ENCODE measurements at regions of chr1 and their contacts with region 1.

Region 1: DNA sequence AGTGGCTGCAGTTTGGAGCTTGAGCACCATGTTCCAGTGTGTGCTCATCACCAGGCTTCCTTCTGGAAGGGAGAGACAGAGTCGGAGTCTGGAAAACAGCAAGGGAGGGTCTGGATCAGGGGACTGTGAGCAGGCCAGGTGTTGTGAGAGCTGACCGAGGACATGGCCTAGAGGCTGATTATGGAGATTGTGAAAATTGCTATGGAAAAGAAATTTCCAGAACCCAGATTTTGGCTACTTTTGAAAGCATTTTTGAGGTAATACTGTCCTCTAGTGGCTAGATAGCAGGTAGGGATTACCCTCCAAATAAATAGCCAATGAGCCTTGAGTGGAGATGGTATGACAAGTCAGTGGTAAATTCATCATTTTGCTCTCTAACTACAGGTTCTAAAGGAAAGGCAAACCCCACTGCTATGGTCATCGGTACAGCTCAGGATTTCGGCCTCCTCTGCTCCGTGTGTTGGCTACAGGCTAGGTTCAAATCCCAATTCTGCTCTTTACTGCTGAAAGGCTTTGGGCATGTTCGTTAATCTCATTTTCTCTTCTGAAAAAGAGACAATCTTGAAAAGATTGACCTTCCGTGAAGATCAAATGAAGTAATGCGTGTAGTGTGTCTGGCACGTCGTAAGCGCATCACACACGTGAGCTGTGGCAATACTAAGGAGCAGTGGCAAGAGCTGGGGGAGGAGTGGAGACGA is 1.0 kb upstream of the HAO2 start:
- ATAC-seq: peak in 5 of 8 experiments; percentile 37 to 84 (median 49)
- H3K4me3 ChIP-seq: no peak overlapping the region
- H3K27ac ChIP-seq: no peak overlapping the region
- H3K4me1 ChIP-seq: no peaks in the 10 kb centered on the region

Region 2: DNA sequence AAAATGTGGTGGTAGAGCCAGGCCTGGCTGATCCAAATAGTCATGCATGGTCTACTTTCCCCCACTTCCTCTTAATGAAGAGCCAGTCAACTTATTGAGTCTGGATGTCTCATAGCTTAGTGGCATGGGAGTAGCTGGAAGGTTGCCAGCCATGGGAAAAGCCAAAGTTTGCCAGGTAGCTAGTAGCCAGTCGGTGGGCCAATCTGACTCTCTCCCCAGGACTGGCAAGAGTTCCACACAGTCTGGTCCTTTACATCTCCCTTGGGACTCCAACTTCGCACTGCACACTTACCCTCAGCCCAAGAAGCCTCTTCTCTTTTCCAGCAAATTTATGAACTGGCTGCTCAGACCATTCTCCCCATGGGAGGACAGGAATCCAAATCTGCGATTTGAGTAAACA is 235.4 kb before region 1 on chr1:
- in situ Hi-C with region 1: no loop called
- ATAC-seq: no peak
- H3K4me3 ChIP-seq: no peak overlapping the region
- H3K27ac ChIP-seq: no peak overlapping the region
- H3K4me1 ChIP-seq: no peaks in the 10 kb centered on the region

Region 3: DNA sequence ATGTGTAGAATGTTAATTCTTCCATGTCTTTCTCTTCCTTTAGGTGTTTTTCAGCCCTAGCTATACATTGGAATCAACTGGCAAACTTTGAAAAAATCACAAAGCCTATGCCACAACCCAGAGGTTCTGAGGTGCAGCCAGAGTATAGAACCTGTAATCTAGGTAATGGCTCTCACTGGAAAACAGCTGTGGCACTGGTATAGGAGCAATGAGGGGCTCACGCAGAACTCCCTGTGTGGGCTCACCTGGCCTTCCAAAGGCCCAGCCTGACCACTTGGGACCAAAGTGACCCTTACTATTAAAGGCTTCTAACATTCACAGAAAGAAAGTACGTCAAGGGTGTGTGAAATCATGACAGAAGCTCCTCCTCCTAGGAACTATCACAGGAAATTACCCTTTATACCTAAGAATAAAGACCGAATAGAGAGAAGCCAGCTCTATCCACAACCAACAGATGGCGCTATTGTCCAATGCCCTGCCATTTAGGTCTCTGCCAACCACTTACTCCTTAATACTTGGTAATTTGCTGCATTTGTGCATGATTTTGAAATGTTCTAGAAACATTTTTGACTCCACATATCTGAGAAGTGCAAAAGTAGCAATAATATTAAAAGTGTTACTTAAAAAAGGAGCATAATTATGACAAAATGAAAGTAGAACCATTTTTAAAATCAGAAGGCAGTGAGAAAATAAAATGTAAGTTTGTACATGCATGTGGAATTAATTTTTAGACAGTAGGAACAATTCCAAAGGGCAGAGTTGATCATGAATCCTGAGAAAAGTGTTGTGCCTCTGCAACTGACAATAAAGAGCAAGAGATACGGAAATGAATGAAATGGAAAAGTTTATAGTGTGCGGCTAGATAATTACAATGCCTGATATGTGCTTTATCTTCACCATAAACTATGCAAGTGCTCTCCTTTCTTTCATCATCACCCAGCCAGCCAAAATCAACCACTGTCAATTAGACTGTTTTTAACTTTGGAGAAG is 92.1 kb before region 1 on chr1:
- in situ Hi-C with region 1: loop called in 4 of 9 experiments (anchors 10 kb)
- ATAC-seq: peak; percentile 39 to 77 (median 56)
- H3K4me3 ChIP-seq: no peak overlapping the region
- H3K27ac ChIP-seq: no peak overlapping the region
- H3K4me1 ChIP-seq: no peaks in the 10 kb centered on the region

Region 4: DNA sequence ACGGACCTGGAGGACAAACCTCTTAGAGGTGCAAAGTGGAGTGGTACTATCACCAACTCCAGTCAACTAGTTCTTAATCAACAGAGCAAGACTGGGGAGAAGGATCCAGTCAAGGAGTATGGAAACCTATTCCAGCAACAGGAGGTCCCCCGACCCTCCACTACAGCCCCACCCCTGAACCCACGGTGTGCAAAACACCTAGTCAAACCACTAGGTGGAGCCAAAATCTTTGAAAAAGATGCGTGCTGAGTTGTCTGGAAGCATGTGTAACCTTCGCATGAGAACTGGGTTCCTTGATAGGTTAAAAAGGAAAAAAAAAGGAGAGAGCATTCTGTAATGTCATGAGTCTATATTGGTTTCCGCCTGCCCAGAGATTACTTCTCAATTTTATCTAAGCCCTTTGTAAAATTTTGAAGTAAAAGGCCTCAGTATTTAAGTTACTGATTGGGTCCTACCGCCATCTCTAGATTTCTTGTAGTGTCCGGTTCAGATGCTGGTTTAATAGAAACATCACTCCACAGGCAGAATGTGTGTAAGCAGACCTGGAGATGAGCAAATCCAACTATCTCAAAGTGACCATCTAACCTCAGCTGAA is 80.9 kb before region 1 on chr1:
- in situ Hi-C with region 1: loop called in 3 of 9 experiments (anchors 10 kb)
- ATAC-seq: peak; percentile 70 to 100 (median 89)
- H3K4me3 ChIP-seq: no peak overlapping the region
- H3K27ac ChIP-seq: no peak overlapping the region
- H3K4me1 ChIP-seq: no peaks in the 10 kb centered on the region

Measured in motor neuron (in vitro differentiated cells).